PC-3 (cell line): ENCODE measurements at regions of chr12 and their contacts with region 1.

Region 1: GRCh38 chr12:52023182-52023975 is 16.6 kb downstream of the TAMALIN start:
- DNase-seq: peak; percentile 78
- ATAC-seq: peak; percentile 64
- H3K4me3 ChIP-seq: peak overlapping the region; percentile 79
- H3K27ac ChIP-seq: no peak overlapping the region
- H3K4me1 ChIP-seq: peaks cover 18% of the 10 kb centered on the region
- H3K27me3 ChIP-seq: no peaks in the 10 kb centered on the region
- CTCF ChIP-seq: peak; percentile 93

Region 2: GRCh38 chr12:51891843-51892242 is 131.5 kb before region 1 on chr12:
- CTCF ChIA-PET with region 1: interaction called, 6 read pairs
- POLR2A ChIA-PET with region 1: no interaction called
- intact Hi-C with region 1: loop called (anchors 2 kb)
- DNase-seq: peak; percentile 25
- ATAC-seq: no peak
- H3K4me3 ChIP-seq: no peak overlapping the region
- H3K27ac ChIP-seq: no peak overlapping the region
- H3K4me1 ChIP-seq: no peaks in the 10 kb centered on the region
- H3K27me3 ChIP-seq: no peaks in the 10 kb centered on the region
- CTCF ChIP-seq: peak; percentile 65

Region 3: DNA sequence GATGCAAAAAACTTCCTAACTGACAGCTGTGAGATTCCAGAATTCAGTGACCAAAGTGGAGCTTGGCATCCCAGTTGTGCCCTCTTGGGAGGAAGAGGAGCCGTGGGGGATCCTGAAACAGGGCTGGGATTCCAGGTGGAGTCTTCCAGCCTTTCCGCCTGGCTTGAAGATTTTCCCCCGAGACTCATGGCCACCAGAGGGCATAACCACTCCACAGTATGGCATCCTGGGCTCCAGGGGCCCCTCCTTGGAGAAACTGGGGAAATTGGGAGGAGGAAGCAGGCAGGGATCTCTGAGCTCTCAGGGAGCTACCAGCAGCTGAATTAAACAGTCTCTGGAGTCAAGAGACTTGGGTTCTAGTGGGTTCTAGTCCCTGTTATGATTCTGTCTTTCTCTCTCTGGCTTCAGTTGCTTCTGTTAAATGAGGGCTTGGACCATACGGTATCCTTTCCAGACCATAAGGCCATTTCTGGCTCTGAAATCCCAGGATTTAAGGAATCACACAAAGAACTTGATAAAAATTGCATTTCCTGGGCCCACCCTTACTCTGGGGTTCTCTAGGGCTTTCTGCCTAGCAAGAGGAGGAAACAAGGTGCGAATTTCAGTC is 19.2 kb before region 1 on chr12:
- CTCF ChIA-PET with region 1: interaction called, 18 read pairs
- POLR2A ChIA-PET with region 1: interaction called, 3 read pairs
- intact Hi-C with region 1: loop called (anchors 1 kb)
- DNase-seq: peak; percentile 65
- ATAC-seq: peak; percentile 87
- H3K4me3 ChIP-seq: no peak overlapping the region
- H3K27ac ChIP-seq: no peak overlapping the region
- H3K4me1 ChIP-seq: no peaks in the 10 kb centered on the region
- H3K27me3 ChIP-seq: no peaks in the 10 kb centered on the region
- CTCF ChIP-seq: peak; percentile 78

Region 4: DNA sequence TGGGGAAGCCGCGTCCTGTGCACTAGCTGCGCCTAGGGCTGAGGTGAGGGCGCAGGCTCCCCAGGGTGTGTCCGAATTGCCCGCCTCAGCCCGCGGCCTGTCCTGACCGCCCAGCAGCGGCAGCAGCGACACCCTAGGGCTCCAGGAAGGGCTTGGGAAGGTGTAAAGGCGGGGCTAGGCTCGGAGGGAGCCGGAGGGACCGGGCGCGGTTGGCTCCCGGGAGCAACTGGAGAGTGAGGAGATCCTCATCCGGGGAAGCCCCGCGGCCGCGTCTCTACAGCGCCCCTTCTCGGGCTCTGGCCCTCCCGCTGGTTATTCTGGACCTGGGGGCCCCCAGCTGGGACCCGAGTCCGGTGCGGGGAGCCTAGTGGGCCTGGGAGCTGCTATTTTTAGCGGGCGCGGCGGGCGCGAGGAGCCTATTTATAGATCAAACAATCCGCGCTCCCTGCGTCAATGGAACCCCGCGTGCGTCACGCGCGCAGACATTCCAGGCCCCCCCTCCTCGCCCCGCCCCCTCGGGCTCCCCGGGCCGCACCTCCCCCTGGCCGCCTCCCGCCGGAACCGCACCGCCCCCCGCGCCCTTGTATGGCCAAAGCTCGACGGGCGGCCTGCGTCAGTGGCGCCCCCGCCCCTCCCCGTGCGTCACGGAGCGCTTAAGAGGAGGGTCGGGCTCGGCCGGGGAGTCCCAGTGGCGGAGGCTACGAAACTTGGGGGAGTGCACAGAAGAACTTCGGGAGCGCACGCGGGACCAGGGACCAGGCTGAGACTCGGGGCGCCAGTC is 27.6 kb after region 1 on chr12 and contains the start of gene NR4A1:
- CTCF ChIA-PET with region 1: interaction called, 7 read pairs
- POLR2A ChIA-PET with region 1: interaction called, 4 read pairs
- intact Hi-C with region 1: loop called (anchors 1 kb)
- DNase-seq: peak; percentile 90
- ATAC-seq: peak; percentile 80
- H3K4me3 ChIP-seq: peak within 1 kb of the TSS; percentile 79
- H3K27ac ChIP-seq: peak within 1 kb of the TSS; percentile 93
- H3K4me1 ChIP-seq: peaks cover 23% of the 10 kb centered on the region
- H3K27me3 ChIP-seq: no peaks in the 10 kb centered on the region
- CTCF ChIP-seq: peak; percentile 25; the same call in 1 of the 2 replicates
- total RNA-seq, gene NR4A1: 90.7 and 110 TPM in 2 replicates

Region 5: DNA sequence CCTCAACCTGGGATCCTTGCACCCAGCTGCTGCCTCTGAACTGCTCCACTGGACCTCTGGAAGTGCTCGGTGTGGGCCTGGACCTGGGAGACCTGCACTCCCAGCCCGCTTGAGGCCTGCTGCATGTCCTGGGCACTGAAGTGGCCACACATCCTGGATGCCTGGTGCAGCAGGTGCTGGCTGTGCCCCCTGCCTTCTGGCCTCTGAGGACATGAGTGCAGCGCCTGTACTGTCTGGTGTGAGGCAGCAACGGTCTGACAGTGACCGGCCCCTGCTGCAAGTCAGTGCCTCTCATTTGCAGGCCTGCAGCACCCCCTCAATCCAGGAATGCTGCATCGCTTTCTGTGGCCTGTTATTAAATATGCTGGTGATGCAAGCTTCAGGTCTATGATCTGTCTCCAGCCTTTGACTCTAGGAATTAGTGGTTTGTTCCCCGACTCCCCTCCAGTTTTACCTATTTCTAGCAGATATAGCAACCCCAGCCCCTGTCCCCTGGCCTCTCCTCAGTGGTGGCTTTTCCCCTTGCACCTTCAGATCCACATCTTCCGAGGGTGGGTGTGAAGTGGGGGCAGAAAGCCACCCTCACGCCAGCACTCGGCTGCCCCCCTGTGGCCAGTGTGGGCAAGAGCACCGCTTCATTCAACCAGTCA is 59.7 kb after region 1 on chr12:
- CTCF ChIA-PET with region 1: interaction called, 28 read pairs
- POLR2A ChIA-PET with region 1: no interaction called
- intact Hi-C with region 1: loop called (anchors 1 kb)
- DNase-seq: peak; percentile 65
- ATAC-seq: peak; percentile 62
- H3K4me3 ChIP-seq: no peak overlapping the region
- H3K27ac ChIP-seq: no peak overlapping the region
- H3K4me1 ChIP-seq: no peaks in the 10 kb centered on the region
- H3K27me3 ChIP-seq: no peaks in the 10 kb centered on the region
- CTCF ChIP-seq: peak; percentile 98

Region 6: GRCh38 chr12:52167954-52168717 is 144.8 kb after region 1 on chr12:
- CTCF ChIA-PET with region 1: no interaction called
- POLR2A ChIA-PET with region 1: no interaction called
- intact Hi-C with region 1: no loop called
- DNase-seq: peak; percentile 61
- ATAC-seq: peak; percentile 37
- H3K4me3 ChIP-seq: no peak overlapping the region
- H3K27ac ChIP-seq: peak overlapping the region; percentile 22
- H3K4me1 ChIP-seq: peaks cover 61% of the 10 kb centered on the region
- H3K27me3 ChIP-seq: no peaks in the 10 kb centered on the region
- CTCF ChIP-seq: no peak